Cardiac septum (tissue), 1 donor: ENCODE measurements at regions of chr15 and their contacts with region 1.

Region 1: DNA sequence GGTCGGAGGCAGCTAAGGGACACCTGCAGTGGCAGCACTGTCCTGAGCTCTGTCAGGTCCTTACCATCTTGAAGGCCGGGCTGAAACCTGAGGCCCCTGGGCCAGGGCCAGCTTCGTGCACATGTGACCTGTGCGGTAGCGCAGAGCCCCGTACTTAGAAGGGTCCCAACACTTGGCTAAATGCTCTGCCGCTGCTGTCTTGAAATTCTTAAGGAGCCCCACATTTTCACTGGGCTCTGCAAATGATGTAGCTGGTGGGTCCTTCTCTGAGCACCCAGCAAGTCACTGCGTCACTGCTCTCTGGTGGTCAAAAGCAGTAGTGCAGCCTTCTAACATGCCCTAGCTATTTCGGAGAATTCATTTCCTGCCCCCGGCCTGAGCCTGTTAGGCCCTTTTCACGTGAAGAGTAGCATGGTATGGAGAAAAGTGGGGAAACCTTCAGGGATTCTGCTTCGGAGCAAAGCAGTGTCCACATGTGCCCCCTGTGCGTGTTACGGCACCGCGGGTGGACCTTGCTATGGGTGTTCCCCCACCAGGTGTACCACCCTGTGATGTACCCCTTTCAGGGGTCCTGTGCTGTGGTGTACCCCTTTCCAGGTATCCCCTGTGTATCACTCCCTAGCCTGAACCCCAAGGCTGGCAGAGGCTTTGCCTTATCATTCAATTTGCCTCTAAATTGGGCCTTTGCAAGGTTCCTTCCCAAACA is 79.7 kb downstream of the TMEM266 start:
- DNase-seq: no peak

Region 2: GRCh38 chr15:75891895-75892294 is 247.6 kb before region 1 on chr15:
- intact Hi-C with region 1: no loop called
- DNase-seq: no peak

Region 3: GRCh38 chr15:76057332-76058000 is 82.1 kb before region 1 on chr15:
- intact Hi-C with region 1: loop called (anchors 1 kb)
- DNase-seq: no peak